Posterior cingulate gyrus (tissue), 11 donors: ENCODE measurements at regions of chr4 and their contacts with region 1.

Region 1: DNA sequence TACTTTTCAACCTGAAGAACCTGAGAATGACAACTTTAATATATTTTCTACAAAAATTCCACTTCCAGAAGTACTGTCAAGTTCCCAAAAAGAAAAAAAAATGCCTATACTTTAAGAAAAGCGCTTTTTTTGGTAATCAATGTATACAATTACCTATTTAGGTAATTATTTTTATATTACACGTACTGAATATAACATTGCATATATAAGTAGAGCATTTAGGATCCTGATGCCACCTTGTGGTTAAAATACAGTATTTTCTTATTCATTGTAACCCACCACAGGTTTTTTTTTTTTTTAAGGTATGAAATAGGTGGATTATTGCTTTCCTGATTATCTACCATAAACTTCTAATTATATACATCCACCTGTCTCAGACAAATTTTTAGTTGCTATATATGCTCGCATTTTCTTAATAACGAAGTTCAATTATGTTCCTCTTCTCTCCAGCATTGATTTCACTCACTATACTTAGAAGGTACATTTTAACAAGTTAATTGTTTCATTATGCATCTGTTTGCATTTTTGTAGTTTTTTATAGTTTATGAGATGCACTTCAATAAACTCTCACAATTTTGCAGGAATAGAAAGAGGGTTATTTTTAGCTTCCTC is 5.2 kb downstream of the MAP9 start:
- DNase-seq: no peak

Region 2: DNA sequence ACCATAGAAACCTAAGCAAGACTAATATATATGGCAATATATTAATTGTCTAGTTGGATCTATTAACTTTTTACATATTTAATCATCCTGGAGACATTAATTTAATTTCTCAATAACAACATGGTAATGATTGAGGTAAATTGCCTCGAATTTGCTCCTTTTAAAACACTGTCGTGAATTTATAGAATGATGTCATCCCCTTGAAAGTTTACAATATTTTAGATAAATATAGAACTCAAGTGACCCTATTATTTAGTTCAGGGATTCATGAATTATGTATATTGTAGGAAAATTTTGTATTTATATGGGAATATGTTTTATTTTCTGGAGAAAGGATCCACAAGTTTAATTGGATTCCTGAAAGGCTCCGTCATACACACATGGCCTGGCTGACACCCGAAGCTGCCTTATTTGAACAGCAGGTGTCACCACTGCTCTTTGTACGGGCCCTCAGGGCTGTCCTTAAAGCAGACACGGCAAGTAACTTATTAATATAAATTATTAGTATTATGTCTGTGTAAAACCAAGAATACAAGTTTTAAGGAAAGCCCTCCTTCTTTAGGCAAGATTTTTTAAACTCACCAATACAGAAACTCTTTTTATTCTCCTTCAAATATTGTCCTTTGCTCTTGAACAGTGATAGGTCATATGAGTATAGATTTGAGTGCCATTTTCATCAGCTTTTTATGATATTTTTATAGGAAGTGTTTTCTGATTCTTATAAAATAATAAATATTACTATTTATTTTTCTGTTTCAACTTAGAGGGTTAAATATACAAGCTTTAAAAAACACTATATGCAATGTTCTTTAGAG is 819.5 kb before region 1 on chr4:
- intact Hi-C with region 1: loop called (anchors 5 kb)
- DNase-seq: peak; percentile 51 to 96 (median 75)

Region 3: GRCh38 chr4:154807042-154807630 is 564.4 kb before region 1 on chr4:
- intact Hi-C with region 1: loop called (anchors 5 kb)
- DNase-seq: no peak

Region 4: DNA sequence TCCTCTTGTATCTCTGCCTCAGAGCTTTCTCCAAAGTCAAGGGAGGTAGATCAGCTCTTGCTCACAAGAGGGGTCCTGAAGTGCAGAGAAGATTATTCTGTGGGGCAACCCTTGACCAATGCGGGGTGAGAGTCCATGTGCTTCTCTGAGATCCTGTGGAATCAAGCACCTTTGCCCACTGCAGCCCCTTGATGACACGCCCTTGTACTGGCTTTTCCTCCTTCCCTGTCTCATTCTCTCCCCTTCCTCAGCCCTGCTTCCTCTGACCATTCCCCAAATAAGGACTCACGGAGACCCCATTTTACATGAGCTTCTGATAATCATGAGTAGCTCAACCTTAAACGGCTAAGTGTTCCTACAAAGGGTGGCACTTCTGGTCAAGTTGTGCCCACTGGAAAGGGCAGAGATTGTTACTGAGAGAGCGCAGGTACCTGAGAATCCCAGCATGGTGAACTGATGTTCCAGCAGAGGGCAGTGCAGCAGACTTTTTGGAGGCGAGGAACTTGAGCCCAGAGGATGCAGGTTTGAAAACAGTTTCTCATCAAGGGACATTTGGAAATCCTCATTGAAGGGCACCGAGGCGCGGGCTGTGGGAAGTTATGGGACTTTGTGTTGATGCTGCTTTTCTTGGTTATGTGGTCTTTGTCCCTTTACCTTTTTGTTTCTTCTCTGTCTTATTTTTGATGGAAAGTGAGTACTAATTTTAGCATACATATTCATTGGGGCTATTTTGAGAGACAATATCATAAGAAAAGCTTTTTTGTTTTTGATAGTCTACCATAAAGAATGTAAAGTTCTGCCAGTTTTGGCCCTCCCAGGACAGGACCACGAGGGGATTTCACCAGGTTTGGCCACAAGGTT is 389.1 kb before region 1 on chr4:
- intact Hi-C with region 1: loop called (anchors 5 kb)
- DNase-seq: peak; percentile 17 to 91 (median 70)